Psoas muscle (tissue), 8 donors: ENCODE measurements at regions of chr9 and their contacts with region 1.

Region 1: DNA sequence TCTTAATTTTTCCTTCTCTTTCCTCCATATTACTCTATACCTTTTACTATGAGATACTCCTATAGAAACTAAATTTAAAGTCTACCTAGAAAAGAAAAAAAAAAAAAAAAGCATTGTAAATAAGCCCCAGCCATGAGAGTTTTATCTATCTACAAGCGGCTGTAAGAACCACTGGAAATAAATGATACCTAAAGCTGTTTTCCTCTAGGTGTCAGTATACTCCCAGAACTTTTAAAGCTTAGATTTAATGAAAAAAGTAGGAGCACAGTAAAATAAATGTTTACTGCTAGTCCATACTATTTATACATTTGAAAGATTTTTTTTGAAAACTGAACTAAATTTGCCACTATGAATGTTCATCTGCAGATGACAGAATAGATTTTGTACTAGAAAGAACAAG is 26.2 kb downstream of the TYRP1 start:
- DNase-seq: no peak
- ATAC-seq: peak in 3 of 4 donors; percentile 25 to 61 (median 43)
- H3K4me3 ChIP-seq: no peak overlapping the region
- H3K27ac ChIP-seq: no peak overlapping the region
- H3K4me1 ChIP-seq: no peaks in the 10 kb centered on the region
- H3K27me3 ChIP-seq: no peaks in the 10 kb centered on the region
- CTCF ChIP-seq: peak; percentile 48

Region 2: GRCh38 chr9:11417782-11418181 is 1301.6 kb before region 1 on chr9:
- intact Hi-C with region 1: no loop called
- DNase-seq: no peak
- ATAC-seq: no peak
- H3K4me3 ChIP-seq: no peak overlapping the region
- H3K27ac ChIP-seq: no peak overlapping the region
- H3K4me1 ChIP-seq: no peaks in the 10 kb centered on the region
- H3K27me3 ChIP-seq: no peaks in the 10 kb centered on the region
- CTCF ChIP-seq: no peak

Region 3: GRCh38 chr9:12884737-12885414 is 165.4 kb after region 1 on chr9:
- intact Hi-C with region 1: loop called (anchors 2 to 10 kb)
- DNase-seq: no peak
- ATAC-seq: peak in 2 of 4 donors; percentile 49
- H3K4me3 ChIP-seq: no peak overlapping the region
- H3K27ac ChIP-seq: no peak overlapping the region
- H3K4me1 ChIP-seq: no peaks in the 10 kb centered on the region
- H3K27me3 ChIP-seq: no peaks in the 10 kb centered on the region
- CTCF ChIP-seq: peak; percentile 44

Region 4: DNA sequence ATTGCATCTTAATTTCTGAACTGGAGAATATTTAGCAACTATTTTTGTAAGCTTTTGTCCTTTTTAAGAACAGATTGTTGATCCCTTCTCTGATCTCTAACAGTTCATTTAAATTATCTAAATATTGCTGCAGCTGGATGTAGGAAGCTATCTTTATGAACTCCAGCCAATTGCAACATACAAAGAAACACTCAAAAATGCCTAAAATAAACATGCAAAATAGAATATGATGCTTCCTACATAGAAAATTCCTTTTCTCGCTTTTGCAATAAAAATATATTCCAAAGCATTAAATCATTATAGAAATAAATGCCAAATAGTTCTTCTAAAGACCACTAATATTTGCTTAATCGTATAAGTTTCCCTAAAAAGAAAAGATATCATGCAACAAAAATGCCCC is 274.0 kb after region 1 on chr9:
- intact Hi-C with region 1: loop called in 1 of 2 experiments (anchors 10 kb)
- DNase-seq: no peak
- ATAC-seq: no peak
- H3K4me3 ChIP-seq: no peak overlapping the region
- H3K27ac ChIP-seq: no peak overlapping the region
- H3K4me1 ChIP-seq: no peaks in the 10 kb centered on the region
- H3K27me3 ChIP-seq: no peaks in the 10 kb centered on the region
- CTCF ChIP-seq: no peak